Endothelial cell of umbilical vein (primary cell): ENCODE measurements at regions of chr19 and their contacts with region 1.

Region 1: GRCh38 chr19:16495982-16496612 is at the starts of genes C19orf44 and CALR3:
- DNase-seq: peak; percentile 99
- H3K4me3 ChIP-seq: peak within 1 kb of the TSS; percentile 63 to 87 (median 80)
- H3K27ac ChIP-seq: peak within 1 kb of the TSS; percentile 49
- H3K4me1 ChIP-seq: peaks cover 7% of the 10 kb centered on the region
- H3K27me3 ChIP-seq: no peaks in the 10 kb centered on the region
- CTCF ChIP-seq: no peak
- POLR2A ChIP-seq: peak; percentile 71
- total RNA-seq, gene C19orf44: 4.3 and 4.8 TPM in 2 replicates
- total RNA-seq, gene CALR3: not detected in 2 replicates

Region 2: GRCh38 chr19:16435238-16435917 is 60.7 kb before region 1 on chr19:
- CTCF ChIA-PET with region 1: interaction called, 5 read pairs
- POLR2A ChIA-PET with region 1: no interaction called
- dilution Hi-C with region 1: no loop called
- intact Hi-C with region 1: loop called (anchors 5 kb)
- DNase-seq: peak; percentile 84
- H3K4me3 ChIP-seq: no peak overlapping the region
- H3K27ac ChIP-seq: peak overlapping the region; percentile 72
- H3K4me1 ChIP-seq: peaks cover 27% of the 10 kb centered on the region
- H3K27me3 ChIP-seq: no peaks in the 10 kb centered on the region
- CTCF ChIP-seq: no peak
- POLR2A ChIP-seq: no peak

Region 3: GRCh38 chr19:16441661-16442162 is 54.4 kb before region 1 on chr19:
- CTCF ChIA-PET with region 1: interaction called, 18 read pairs
- POLR2A ChIA-PET with region 1: no interaction called
- dilution Hi-C with region 1: no loop called
- intact Hi-C with region 1: loop called (anchors 2 kb)
- DNase-seq: peak; percentile 38
- H3K4me3 ChIP-seq: no peak overlapping the region
- H3K27ac ChIP-seq: no peak overlapping the region
- H3K4me1 ChIP-seq: peaks cover 32% of the 10 kb centered on the region
- H3K27me3 ChIP-seq: no peaks in the 10 kb centered on the region
- CTCF ChIP-seq: peak; percentile 71 to 74
- POLR2A ChIP-seq: no peak

Region 4: DNA sequence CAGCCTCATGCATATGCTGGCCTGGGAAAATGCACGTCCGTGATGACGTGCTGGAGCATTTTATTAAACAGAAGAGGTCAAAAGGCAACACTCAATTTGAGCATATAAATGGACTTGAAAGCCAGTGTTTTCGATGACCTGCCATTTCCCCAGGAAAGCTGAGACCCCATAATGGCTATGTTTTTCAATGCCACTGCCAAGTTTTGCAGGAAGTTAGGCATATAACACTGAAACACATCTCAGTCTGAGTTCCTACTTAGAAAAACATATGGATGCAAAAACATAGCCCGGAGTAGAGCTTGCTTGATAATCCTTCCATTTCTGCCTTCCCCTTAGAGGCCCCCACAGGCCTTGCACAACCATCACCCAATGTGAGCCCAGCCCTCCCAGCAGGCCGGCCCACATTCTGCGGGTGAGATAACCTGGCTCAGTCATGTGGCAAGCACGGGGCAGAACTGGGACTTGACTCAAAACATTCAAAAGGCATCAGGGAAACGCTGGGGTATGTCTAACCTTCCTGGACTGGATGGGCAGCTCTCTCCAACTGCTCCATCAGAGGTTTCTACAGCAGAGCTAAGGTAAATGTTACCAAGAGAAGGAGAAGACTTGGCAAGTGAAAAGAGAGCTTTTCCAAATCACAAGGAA is 49.3 kb before region 1 on chr19:
- CTCF ChIA-PET with region 1: interaction called, 18 read pairs
- POLR2A ChIA-PET with region 1: no interaction called
- dilution Hi-C with region 1: no loop called
- intact Hi-C with region 1: loop called (anchors 2 kb)
- DNase-seq: peak; percentile 99
- H3K4me3 ChIP-seq: peak overlapping the region in 1 of 3 experiments; percentile 36
- H3K27ac ChIP-seq: peak overlapping the region; percentile 81
- H3K4me1 ChIP-seq: peaks cover 41% of the 10 kb centered on the region
- H3K27me3 ChIP-seq: no peaks in the 10 kb centered on the region
- CTCF ChIP-seq: no peak
- POLR2A ChIP-seq: peak; percentile 73

Region 5: DNA sequence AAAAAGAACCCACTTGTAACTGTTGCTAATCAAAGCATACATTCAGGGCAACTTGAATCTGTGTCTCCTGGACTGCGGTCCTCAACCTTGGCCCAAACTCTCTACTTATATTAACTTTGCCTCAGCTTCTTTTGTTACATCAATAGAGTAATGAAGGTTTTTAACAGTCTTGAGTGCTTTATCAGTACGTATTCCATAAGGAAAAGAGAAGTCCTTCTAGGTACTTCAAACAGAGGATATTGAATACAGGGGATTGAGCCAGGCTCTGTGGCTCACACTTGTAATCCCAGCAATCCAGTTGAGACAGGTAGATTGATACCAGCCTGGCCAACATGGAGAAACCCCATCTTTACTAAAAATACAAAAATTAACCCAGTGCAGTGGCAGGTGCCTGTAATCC is 23.1 kb before region 1 on chr19:
- CTCF ChIA-PET with region 1: no interaction called
- POLR2A ChIA-PET with region 1: no interaction called
- dilution Hi-C with region 1: no loop called
- intact Hi-C with region 1: loop called (anchors 1 kb)
- DNase-seq: no peak
- H3K4me3 ChIP-seq: no peak overlapping the region
- H3K27ac ChIP-seq: no peak overlapping the region
- H3K4me1 ChIP-seq: peaks cover 11% of the 10 kb centered on the region
- H3K27me3 ChIP-seq: no peaks in the 10 kb centered on the region
- CTCF ChIP-seq: no peak
- POLR2A ChIP-seq: no peak

Region 6: GRCh38 chr19:16541526-16542044 is 45.5 kb after region 1 on chr19:
- CTCF ChIA-PET with region 1: no interaction called
- POLR2A ChIA-PET with region 1: no interaction called
- dilution Hi-C with region 1: no loop called
- intact Hi-C with region 1: no loop called
- DNase-seq: peak; percentile 60
- H3K4me3 ChIP-seq: peak overlapping the region; percentile 66 to 85 (median 70)
- H3K27ac ChIP-seq: peak overlapping the region; percentile 70
- H3K4me1 ChIP-seq: peaks cover 12% of the 10 kb centered on the region
- H3K27me3 ChIP-seq: no peaks in the 10 kb centered on the region
- CTCF ChIP-seq: no peak
- POLR2A ChIP-seq: no peak

Region 7: GRCh38 chr19:16554776-16555175 is 58.7 kb after region 1 on chr19:
- CTCF ChIA-PET with region 1: no interaction called
- POLR2A ChIA-PET with region 1: no interaction called
- dilution Hi-C with region 1: no loop called
- intact Hi-C with region 1: no loop called
- DNase-seq: no peak
- H3K4me3 ChIP-seq: no peak overlapping the region
- H3K27ac ChIP-seq: no peak overlapping the region
- H3K4me1 ChIP-seq: no peaks in the 10 kb centered on the region
- H3K27me3 ChIP-seq: no peaks in the 10 kb centered on the region
- CTCF ChIP-seq: no peak
- POLR2A ChIP-seq: no peak